ENCODE measurements at regions of chr2 and their contacts with region 1.

Region 1: DNA sequence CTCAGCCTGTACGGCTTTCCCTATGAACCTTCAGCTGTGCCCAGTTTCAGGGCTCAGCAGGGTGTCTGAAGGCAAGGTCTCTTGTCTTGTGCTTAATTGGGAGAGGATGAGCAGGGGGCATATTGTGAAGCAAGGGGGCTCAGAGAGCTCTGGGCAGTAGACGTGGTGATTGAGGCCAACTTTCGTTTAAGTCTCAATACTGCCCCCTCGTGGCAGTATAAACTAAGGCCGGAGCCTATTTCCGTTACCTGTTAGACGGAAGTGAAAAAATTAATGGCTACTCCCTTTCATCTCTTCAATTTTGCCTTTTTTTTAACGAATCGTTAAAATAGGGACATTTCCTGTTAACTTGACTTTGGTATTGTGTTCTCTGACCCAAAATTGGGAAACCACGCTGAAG is 193.4 kb downstream of the TDRD15 start:
- DNase-seq: peak; percentile 68
- H3K4me3 Mint-ChIP-seq: no peak overlapping the region
- H3K27ac Mint-ChIP-seq: no peak overlapping the region
- H3K4me1 Mint-ChIP-seq: no peaks in the 10 kb centered on the region
- H3K27me3 Mint-ChIP-seq: peaks cover 11% of the 10 kb centered on the region
- CTCF ChIP-seq: peak; percentile 64

Region 2: GRCh38 chr2:21175895-21176646 is 141.1 kb before region 1 on chr2:
- CTCF ChIA-PET with region 1: interaction called, 5 read pairs
- POLR2A ChIA-PET with region 1: no interaction called
- intact Hi-C with region 1: loop called (anchors 1 kb)
- DNase-seq: no peak
- H3K4me3 Mint-ChIP-seq: no peak overlapping the region
- H3K27ac Mint-ChIP-seq: no peak overlapping the region
- H3K4me1 Mint-ChIP-seq: no peaks in the 10 kb centered on the region
- H3K27me3 Mint-ChIP-seq: peaks cover 71% of the 10 kb centered on the region
- CTCF ChIP-seq: peak; percentile 37

Region 3: GRCh38 chr2:21220930-21221329 is 96.2 kb before region 1 on chr2:
- CTCF ChIA-PET with region 1: no interaction called
- POLR2A ChIA-PET with region 1: no interaction called
- intact Hi-C with region 1: no loop called
- DNase-seq: peak; percentile 46
- H3K4me3 Mint-ChIP-seq: no peak overlapping the region
- H3K27ac Mint-ChIP-seq: no peak overlapping the region
- H3K4me1 Mint-ChIP-seq: no peaks in the 10 kb centered on the region
- H3K27me3 Mint-ChIP-seq: peaks cover 24% of the 10 kb centered on the region
- CTCF ChIP-seq: no peak

Region 4: DNA sequence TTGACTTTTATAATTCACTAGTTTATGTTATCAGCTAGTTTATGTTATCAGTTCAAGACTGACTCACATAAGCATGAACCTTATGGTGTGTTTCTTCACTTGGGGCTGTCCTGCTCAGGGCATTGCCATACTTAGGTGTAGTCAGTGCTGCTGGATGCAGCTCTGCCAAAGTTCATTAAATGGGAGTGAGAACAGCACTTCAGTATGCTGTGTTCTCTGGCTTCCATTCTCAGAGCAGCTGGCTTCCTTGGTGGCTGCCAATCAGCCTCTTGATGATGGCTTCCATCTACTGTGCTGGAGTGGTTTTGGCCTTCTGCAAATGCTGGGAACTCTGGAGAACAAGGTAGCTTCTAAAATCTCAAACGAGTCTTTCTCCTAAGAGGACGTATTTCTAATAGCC is 22.7 kb before region 1 on chr2:
- CTCF ChIA-PET with region 1: interaction called, 10 read pairs
- POLR2A ChIA-PET with region 1: no interaction called
- intact Hi-C with region 1: no loop called
- DNase-seq: no peak
- H3K4me3 Mint-ChIP-seq: no peak overlapping the region
- H3K27ac Mint-ChIP-seq: no peak overlapping the region
- H3K4me1 Mint-ChIP-seq: no peaks in the 10 kb centered on the region
- H3K27me3 Mint-ChIP-seq: peaks cover 47% of the 10 kb centered on the region
- CTCF ChIP-seq: no peak

Region 5: GRCh38 chr2:21303876-21304275 is 13.3 kb before region 1 on chr2:
- CTCF ChIA-PET with region 1: interaction called, 11 read pairs
- POLR2A ChIA-PET with region 1: interaction called, 3 read pairs
- intact Hi-C with region 1: no loop called
- DNase-seq: no peak
- H3K4me3 Mint-ChIP-seq: no peak overlapping the region
- H3K27ac Mint-ChIP-seq: no peak overlapping the region
- H3K4me1 Mint-ChIP-seq: no peaks in the 10 kb centered on the region
- H3K27me3 Mint-ChIP-seq: peaks cover 4% of the 10 kb centered on the region
- CTCF ChIP-seq: no peak